ENCODE measurements at regions of chr4 and their contacts with region 1.

Region 1: DNA sequence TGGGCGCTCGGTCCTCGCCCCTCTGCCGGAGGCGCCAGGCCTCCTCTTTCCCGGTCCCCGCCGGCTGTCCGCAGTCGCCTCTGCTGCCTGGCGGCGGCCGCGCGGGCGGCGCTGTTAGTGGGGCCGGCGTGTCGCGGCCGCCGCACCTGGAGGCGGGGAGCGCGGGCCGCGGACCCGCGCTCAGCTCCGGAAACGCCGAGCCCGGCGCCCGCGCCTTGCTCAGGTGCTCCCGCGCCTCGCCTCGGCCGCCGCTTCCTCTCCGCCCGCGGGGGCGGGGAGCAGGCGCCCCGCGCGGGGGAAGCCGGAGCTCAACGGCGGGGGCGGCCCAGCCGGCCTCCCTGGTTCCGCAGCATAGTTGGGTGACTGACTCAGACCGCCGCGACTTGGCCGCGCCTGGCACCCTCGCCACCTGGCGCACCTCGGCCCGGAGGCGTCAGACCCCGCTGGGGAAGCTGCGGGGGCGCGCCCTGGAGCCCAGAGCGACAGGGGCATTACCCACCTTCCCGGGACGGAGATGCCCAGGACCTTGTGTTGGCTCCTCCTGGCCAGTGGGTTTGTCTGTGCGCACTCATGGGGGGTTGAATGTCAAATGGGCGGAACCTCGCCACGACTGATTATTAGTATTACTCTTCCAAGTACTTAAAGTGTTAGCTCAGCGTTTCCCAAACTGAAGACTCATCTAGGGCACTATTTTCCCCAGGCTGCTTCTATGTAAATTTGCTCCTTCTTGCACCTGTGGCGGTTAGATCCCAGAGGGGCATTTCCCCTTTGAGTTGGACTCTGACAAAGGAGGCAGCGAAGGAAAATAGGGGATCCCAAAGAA is at the start of gene ARAP2:
- DNase-seq: peak; percentile 73
- H3K4me3 ChIP-seq: peak within 1 kb of the TSS; percentile 74
- H3K27ac ChIP-seq: peak within 1 kb of the TSS; percentile 55
- H3K4me1 ChIP-seq: peaks cover 17% of the 10 kb centered on the region
- CTCF ChIP-seq: no peak
- total RNA-seq, gene ARAP2: 8.2 and 8.6 TPM in 2 replicates

Region 2: GRCh38 chr4:35649778-35650177 is 594.7 kb before region 1 on chr4:
- CTCF ChIA-PET with region 1: no interaction called
- POLR2A ChIA-PET with region 1: no interaction called
- intact Hi-C with region 1: no loop called
- DNase-seq: no peak
- H3K4me3 ChIP-seq: no peak overlapping the region
- H3K27ac ChIP-seq: no peak overlapping the region
- H3K4me1 ChIP-seq: no peaks in the 10 kb centered on the region
- CTCF ChIP-seq: no peak

Region 3: DNA sequence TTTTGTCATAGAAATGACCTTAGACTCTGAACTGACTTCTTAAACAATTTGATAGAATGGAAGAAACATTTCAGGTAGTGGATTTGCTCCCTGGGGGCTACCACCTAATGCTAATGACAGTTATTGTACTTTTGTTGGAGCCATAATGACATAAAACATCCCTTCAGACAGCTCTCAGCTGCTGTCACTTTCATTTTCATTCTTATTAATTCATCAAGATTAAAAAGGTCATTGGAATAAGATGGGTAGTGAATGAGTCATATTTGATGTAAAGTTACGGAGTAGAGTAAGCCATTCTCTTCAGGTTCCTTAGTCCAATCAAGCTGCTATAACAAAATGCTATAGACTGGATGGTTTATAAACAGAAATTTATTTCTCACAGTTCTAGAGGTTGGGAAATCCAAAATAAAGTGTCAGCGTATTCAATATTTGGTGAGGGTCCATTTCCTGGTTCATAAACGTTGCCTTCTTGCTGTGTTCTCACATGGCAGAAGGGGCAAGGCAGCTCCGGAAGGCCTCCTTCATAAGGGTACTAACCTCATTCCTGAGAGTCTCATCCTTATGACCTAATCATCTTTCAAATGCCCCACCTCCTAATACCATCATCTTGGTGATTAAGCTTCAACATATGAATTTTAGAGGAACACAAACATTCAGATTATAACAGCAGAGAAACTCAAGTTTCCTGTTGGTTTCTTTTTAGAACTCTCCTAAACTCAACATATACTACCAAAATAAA is 268.7 kb before region 1 on chr4:
- CTCF ChIA-PET with region 1: no interaction called
- POLR2A ChIA-PET with region 1: no interaction called
- intact Hi-C with region 1: no loop called
- DNase-seq: no peak
- H3K4me3 ChIP-seq: no peak overlapping the region
- H3K27ac ChIP-seq: no peak overlapping the region
- H3K4me1 ChIP-seq: no peaks in the 10 kb centered on the region
- CTCF ChIP-seq: no peak

Region 4: DNA sequence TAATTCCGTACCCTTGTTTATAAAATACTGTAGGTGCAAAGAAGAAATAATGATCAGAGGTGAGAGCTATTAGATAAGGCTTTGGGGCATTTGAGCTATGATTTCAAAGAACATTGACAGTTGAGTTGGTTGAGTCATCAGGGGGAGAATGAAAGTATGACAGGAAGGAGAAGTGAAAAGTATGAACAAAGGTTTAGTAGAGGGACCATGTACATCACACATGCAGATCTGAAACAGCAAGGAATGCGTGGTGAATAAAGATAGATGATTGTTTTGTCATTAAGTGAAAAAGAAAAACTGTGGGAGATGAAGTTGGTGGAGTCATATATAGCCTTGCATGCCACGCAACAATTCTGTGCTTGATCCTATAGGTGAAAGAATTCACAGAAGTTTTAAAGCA is 163.3 kb before region 1 on chr4:
- CTCF ChIA-PET with region 1: no interaction called
- POLR2A ChIA-PET with region 1: no interaction called
- intact Hi-C with region 1: no loop called
- DNase-seq: no peak
- H3K4me3 ChIP-seq: no peak overlapping the region
- H3K27ac ChIP-seq: no peak overlapping the region
- H3K4me1 ChIP-seq: no peaks in the 10 kb centered on the region
- CTCF ChIP-seq: no peak

Region 5: DNA sequence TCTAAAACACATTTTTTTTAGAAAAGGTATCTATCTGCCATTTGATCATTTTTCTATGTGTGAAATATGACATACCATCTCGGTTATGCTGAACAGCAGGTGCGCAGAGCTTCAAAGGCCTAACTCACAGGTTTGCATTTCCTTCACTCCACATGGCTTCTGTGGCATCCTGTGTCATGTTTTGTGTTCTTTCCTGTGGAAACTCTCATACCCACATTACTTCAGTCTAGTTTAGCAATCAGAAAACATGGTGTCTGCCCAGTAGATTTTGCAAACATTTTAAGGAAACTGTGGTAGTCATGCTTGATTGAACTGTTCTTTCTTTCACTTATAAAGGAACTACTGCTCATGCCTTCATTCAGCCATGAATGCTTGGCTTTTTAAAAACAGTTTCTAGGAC is 11.1 kb after region 1 on chr4:
- CTCF ChIA-PET with region 1: interaction called, 3 read pairs
- POLR2A ChIA-PET with region 1: interaction called, 40 read pairs
- intact Hi-C with region 1: loop called (anchors 1 kb)
- DNase-seq: peak; percentile 76
- H3K4me3 ChIP-seq: no peak overlapping the region
- H3K27ac ChIP-seq: peak overlapping the region; percentile 75
- H3K4me1 ChIP-seq: peaks cover 25% of the 10 kb centered on the region
- CTCF ChIP-seq: no peak

Region 6: GRCh38 chr4:36320117-36320896 is 75.8 kb after region 1 on chr4:
- CTCF ChIA-PET with region 1: no interaction called
- POLR2A ChIA-PET with region 1: no interaction called
- intact Hi-C with region 1: no loop called
- DNase-seq: no peak
- H3K4me3 ChIP-seq: no peak overlapping the region
- H3K27ac ChIP-seq: no peak overlapping the region
- H3K4me1 ChIP-seq: no peaks in the 10 kb centered on the region
- CTCF ChIP-seq: no peak

Measured in OCI-LY7 (cell line).